ENCODE measurements at regions of chr9 and their contacts with region 1.

Region 1: GRCh38 chr9:35563791-35564197 is 41.3 kb upstream of the TESK1 start:
- DNase-seq: peak; percentile 49 to 57
- ATAC-seq: peak; percentile 68 to 81 (median 72)
- H3K4me3 ChIP-seq: peak overlapping the region in 7 of 10 donors; percentile 7 to 39 (median 22)
- H3K27ac ChIP-seq: peak overlapping the region; percentile 13 to 70 (median 54)
- H3K4me1 ChIP-seq: peaks cover 13 to 43% (median 25%) of the 10 kb centered on the region in 9 donors
- H3K27me3 ChIP-seq: no peaks in the 10 kb centered on the region
- CTCF ChIP-seq: no peak

Region 2: DNA sequence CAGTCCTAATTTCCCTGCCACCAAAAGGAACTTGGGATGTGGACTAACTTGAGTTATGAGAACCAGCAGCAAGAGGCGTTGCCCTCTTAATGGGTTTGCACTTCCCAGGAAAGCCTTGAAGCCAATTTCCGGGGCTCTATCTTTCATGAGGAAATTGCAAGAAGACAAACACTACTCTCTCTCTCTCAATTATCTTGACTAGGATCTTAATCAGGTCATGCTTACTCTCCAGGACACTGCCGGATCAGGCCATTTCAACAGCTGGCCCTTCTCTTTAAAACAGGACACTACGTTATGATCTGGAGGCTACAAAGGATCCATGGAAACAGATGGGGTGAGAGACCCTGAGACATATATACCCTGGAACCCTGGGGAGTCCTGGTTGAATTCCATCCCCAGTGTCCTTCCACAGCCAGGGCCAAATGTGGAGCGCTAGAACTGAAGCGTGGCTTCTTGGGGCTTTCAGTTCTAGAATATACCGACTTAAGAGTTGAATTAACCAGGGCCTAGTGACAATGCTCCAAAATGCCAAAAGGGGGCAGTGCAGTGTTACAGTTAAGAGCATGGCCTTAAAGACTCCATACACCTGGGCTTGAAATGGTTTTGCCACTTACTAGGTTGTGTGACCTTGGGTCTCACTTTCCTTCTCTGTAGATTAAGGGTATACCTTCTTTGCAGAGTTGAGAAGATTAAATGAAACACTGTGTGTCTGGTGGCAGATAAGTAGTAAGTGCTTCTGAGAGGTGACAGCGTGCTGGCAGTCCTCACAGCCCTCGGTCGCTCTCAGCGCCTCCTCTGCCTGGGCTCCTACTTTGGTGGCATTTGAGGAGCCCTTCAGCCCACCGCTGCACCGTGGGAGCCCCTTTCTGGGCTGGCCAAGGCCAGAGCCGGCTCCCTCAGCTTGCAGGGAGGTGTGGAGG is 1126.5 kb before region 1 on chr9:
- intact Hi-C with region 1: no loop called
- DNase-seq: peak in 1 of 2 donors; percentile 57
- ATAC-seq: peak; percentile 75 to 86 (median 80)
- H3K4me3 ChIP-seq: no peak overlapping the region
- H3K27ac ChIP-seq: no peak overlapping the region
- H3K4me1 ChIP-seq: peaks cover 5 to 50% (median 32%) of the 10 kb centered on the region in 9 donors
- H3K27me3 ChIP-seq: no peaks in the 10 kb centered on the region
- CTCF ChIP-seq: peak; percentile 53 to 86 (median 78)

Region 3: GRCh38 chr9:35481347-35481975 is 82.3 kb before region 1 on chr9:
- intact Hi-C with region 1: loop called in 2 of 10 experiments (anchors 5 kb)
- DNase-seq: peak in 1 of 2 donors; percentile 51
- ATAC-seq: peak in 4 of 8 donors; percentile 57 to 65 (median 60)
- H3K4me3 ChIP-seq: no peak overlapping the region
- H3K27ac ChIP-seq: no peak overlapping the region
- H3K4me1 ChIP-seq: peaks cover 0 to 6% (median 0%) of the 10 kb centered on the region in 9 donors
- H3K27me3 ChIP-seq: no peaks in the 10 kb centered on the region
- CTCF ChIP-seq: peak; percentile 26 to 72 (median 67)

Measured in heart right ventricle (tissue), 16 donors.